A673 (cell line): ENCODE measurements at regions of chr11 and their contacts with region 1.

Region 1: DNA sequence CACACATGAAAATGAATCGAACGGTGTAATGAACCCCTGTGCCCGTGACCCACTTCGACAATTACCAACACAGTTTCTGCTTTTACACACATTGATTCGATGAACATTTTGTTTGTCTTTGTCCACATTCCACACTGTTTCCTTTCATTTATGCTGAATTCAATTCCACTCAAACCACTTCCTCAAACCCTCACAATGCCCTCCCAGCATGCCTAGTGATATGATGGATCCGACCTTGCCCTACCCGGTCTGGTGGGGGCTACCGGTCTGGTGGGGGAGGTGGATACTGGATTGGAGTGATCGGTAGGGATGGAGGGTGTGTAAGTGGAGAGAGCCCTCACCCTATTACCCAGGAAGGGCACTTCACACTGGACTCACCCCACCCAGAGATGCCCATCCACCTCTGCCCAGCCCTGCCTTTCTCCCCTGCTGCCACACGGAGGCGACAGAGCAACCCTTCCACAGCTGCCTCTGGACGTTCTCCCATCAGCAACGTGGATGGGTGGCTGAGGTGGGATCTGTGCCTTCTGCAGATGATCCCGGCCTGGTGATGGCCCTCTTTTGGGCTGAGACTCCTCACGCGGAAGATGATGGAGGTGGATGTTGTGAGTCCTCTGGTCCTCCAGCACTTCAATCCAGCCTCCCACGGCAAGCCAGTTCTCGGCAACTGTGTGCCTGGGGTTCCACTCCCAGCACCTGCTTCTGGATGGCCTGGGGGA is 33.0 kb upstream of the P2RY2 start:
- DNase-seq: peak; percentile 75
- H3K4me3 ChIP-seq: no peak overlapping the region
- H3K27ac ChIP-seq: no peak overlapping the region
- H3K4me1 ChIP-seq: no peaks in the 10 kb centered on the region
- H3K27me3 ChIP-seq: no peaks in the 10 kb centered on the region
- CTCF ChIP-seq: peak; percentile 96

Region 2: DNA sequence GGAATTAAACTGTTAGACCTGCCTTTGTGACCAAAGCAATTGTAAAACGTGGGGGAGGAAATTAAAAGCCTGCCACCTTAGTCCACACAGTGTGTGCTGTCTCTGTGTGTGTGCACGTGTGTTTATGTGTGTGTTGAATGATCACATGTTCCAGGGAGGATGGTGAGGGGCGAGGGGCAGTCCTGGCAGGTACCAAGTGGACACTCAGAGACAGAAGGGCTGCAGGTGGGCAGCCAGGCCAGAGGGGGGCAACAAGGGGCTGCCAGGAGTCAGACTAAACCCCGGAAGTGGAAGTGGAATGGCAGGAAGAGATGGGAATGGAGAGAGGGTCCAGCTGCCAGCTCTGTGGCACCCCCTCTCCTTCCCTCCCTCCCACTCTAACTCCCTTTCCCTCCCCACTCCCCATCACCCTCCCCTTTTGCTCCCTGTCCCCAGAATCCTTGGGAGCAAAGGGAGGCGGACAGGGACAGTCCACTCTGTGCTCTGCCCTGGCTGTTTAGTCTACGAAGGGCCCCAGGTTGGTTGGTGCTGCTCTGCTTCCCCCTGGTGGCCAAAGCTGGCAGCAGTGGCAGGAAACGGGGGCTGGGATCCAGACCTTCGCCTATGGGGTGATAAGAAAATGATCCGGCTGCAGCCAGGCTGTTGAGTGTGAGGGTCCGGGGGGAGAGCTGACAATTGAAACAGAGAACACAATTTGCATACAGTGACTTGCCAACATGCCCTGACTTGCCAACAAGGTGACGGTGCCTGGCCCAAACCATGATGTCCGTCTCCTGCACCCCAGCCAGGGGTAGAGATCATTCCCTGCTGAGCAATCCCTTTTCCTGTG is 57.4 kb after region 1 on chr11:
- CTCF ChIA-PET with region 1: interaction called, 5 read pairs
- POLR2A ChIA-PET with region 1: no interaction called
- intact Hi-C with region 1: loop called (anchors 1 kb)
- DNase-seq: peak; percentile 82
- H3K4me3 ChIP-seq: peak overlapping the region; percentile 18
- H3K27ac ChIP-seq: no peak overlapping the region
- H3K4me1 ChIP-seq: no peaks in the 10 kb centered on the region
- H3K27me3 ChIP-seq: no peaks in the 10 kb centered on the region
- CTCF ChIP-seq: peak; percentile 99

Region 3: DNA sequence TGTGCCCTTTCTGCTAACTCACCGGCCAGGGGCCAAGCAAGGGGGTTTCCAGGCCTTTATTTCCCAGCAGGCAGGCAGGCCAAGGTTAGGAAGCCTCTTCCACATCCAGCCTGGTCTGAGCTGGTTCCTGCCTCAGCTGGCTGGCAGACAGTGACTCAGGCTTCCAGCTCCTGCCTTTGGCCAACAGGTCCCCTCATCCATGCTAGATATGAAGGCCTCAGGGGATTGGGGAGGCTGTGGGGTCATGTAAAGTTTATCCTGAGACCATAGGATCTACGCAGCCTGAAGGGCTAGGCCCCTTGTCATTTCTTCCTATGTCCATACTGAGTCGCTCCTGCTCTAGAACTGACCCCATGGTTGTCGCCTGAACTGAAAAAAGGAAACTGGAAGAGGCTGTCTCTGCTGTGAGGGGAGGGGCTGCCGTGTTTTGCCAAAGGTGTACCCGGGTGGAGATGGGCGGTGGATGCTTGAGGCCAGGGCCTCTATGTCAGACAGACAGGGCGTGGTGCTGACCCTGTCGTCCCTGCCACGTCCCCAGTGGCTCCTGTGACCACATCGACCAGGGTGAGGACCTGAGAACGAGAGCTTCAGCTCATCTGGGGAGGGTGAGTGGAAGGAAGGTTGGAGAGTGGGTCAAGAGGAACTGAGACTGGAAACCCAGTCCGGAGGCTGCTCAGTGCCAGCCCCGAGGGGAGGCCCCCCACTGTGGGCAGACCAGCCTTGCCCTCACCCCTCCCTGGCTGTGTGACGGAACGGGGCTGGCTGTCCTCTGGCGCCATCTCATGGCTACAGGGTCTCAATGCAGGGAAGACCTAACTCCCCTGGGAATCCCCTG is 104.0 kb after region 1 on chr11:
- CTCF ChIA-PET with region 1: interaction called, 5 read pairs
- POLR2A ChIA-PET with region 1: no interaction called
- intact Hi-C with region 1: loop called (anchors 1 kb)
- DNase-seq: peak; percentile 88
- H3K4me3 ChIP-seq: no peak overlapping the region
- H3K27ac ChIP-seq: no peak overlapping the region
- H3K4me1 ChIP-seq: peaks cover 4% of the 10 kb centered on the region
- H3K27me3 ChIP-seq: no peaks in the 10 kb centered on the region
- CTCF ChIP-seq: peak; percentile 98